ENCODE measurements at regions of chr6 and their contacts with region 1.

Region 1: GRCh38 chr6:33761922-33762629 is 15.4 kb upstream of the IP6K3 start:
- DNase-seq: peak; percentile 88
- H3K4me3 ChIP-seq: no peak overlapping the region
- H3K27ac ChIP-seq: peak overlapping the region in 3 of 4 donors; percentile 54 to 57 (median 54)
- H3K4me1 ChIP-seq: peaks cover 0 to 19% (median 12%) of the 10 kb centered on the region in 4 donors
- H3K27me3 ChIP-seq: no peaks in the 10 kb centered on the region
- CTCF ChIP-seq: peak; percentile 55 to 72 (median 66)
- EP300 ChIP-seq: no peak
- POLR2A ChIP-seq: no peak

Region 2: DNA sequence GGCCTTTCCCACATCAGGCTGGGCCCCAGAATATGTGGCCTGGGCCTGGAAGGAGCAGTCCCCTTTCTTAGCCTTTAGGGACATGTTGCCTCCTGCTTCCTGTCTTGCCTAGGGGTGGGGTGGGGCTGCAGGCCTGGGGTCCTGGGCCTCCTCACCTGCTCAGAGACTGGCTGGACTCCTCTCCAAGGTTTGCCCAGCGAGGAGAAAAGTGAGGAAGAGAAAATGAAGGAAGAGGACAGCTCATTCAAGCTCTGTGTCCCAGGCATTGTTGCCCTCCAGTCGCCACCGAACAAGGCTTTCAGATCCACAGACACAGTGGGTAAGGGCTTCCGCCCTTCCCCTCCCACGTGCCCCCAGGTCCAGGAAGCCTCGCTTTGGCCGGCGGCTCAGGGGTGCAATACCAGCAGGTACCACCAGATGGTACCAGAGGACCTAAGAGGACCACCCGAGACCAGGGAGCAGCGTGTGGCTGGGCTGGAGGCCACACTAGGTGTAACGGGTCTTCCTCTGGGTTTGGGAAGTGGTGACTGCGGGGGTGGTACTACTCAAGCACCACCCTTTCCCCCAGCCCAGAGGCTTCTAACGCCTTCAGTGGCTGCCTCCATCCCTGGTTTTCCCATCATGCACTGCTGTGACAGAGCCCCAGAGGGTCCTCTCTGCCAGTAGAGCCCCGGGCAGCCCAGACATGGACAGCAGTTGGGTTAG is 176.5 kb before region 1 on chr6:
- intact Hi-C with region 1: loop called (anchors 5 kb)
- DNase-seq: peak; percentile 89
- H3K4me3 ChIP-seq: peak overlapping the region in 1 of 4 donors; percentile 6
- H3K27ac ChIP-seq: no peak overlapping the region
- H3K4me1 ChIP-seq: peaks cover 0 to 20% (median 11%) of the 10 kb centered on the region in 4 donors
- H3K27me3 ChIP-seq: no peaks in the 10 kb centered on the region
- CTCF ChIP-seq: peak; percentile 93 to 99 (median 96)
- EP300 ChIP-seq: no peak
- POLR2A ChIP-seq: no peak

Region 3: GRCh38 chr6:33711140-33712129 is 50.6 kb before region 1 on chr6 and contains the start of gene UQCC2:
- intact Hi-C with region 1: loop called (anchors 2 kb)
- DNase-seq: peak; percentile 99
- H3K4me3 ChIP-seq: peak within 1 kb of the TSS; percentile 66 to 82 (median 77)
- H3K27ac ChIP-seq: peak within 1 kb of the TSS; percentile 90 to 96 (median 93)
- H3K4me1 ChIP-seq: peaks cover 0 to 19% (median 16%) of the 10 kb centered on the region in 4 donors
- H3K27me3 ChIP-seq: no peaks in the 10 kb centered on the region
- CTCF ChIP-seq: peak in 3 of 4 experiments; percentile 37 to 62 (median 60)
- EP300 ChIP-seq: no peak
- POLR2A ChIP-seq: peak; percentile 78 to 80
- total RNA-seq, gene UQCC2: 9.5 to 34.9 (median 28.7) TPM

Region 4: DNA sequence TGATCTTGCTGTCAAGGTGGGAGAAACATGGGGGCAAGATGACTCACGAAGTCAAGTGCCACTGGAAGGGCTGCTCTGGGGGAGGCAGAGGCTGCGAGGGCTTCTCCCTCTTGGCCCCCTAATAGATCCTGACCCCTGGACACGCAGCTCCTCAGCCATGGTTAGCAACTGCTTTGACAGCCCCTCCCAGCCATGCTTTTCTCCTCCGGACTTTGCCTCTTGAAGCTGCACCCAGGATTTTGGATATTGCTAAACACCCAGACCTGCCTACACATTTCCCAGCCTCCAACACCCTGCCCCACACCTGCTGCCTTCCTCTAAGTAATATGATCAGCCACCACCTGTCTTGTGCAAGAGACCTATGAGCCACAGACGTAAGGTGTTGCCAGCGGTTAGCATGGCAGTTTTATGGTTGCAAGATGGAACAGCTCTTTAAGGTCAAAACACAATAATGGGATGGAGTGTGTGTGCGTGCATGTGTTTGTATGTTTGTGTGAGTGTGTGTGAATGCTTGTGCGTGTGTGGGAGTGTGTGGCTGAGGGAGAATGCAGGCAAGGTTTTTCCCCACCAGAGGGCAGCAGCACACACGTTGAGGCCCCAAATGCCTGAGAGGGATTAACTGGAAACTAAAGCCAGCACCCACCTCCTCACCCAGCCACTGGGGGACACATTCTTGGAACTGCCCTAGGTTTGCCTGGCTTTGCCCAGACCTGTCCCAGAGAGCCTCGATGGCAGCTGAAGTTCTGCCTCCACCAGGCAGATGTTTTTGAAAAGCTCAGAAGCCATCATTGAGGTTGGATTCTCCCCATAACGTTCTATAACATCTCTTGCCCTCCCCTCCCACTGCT is 17.9 kb before region 1 on chr6:
- intact Hi-C with region 1: loop called (anchors 1 kb)
- DNase-seq: peak; percentile 86
- H3K4me3 ChIP-seq: peak overlapping the region in 3 of 4 donors; percentile 45 to 49 (median 46)
- H3K27ac ChIP-seq: peak overlapping the region in 3 of 4 donors; percentile 90 to 93 (median 90)
- H3K4me1 ChIP-seq: peaks cover 0 to 63% (median 43%) of the 10 kb centered on the region in 4 donors
- H3K27me3 ChIP-seq: no peaks in the 10 kb centered on the region
- CTCF ChIP-seq: peak; percentile 92 to 96 (median 95)
- EP300 ChIP-seq: no peak
- POLR2A ChIP-seq: no peak

Region 5: GRCh38 chr6:34425498-34426410 is 663.7 kb after region 1 on chr6 and contains the start of gene RPS10:
- intact Hi-C with region 1: no loop called
- DNase-seq: peak; percentile 97
- H3K4me3 ChIP-seq: peak within 1 kb of the TSS; percentile 56 to 81 (median 74)
- H3K27ac ChIP-seq: peak within 1 kb of the TSS; percentile 78 to 91 (median 86)
- H3K4me1 ChIP-seq: peaks cover 0 to 16% (median 11%) of the 10 kb centered on the region in 4 donors
- H3K27me3 ChIP-seq: no peaks in the 10 kb centered on the region
- CTCF ChIP-seq: no peak
- EP300 ChIP-seq: peak in 1 of 4 donors; percentile 3
- POLR2A ChIP-seq: peak; percentile 73 to 89
- total RNA-seq, gene RPS10: 2,556 to 7,534 (median 4,475) TPM